PC-9 (cell line): ENCODE measurements at regions of chr3 and their contacts with region 1.

Region 1: GRCh38 chr3:130539005-130539404 is 22.0 kb downstream of the COL6A6 start:
- DNase-seq: peak in 1 of 2 experiments; percentile 43
- H3K4me3 ChIP-seq: no peak overlapping the region
- H3K27ac ChIP-seq: no peak overlapping the region
- H3K4me1 ChIP-seq: no peaks in the 10 kb centered on the region
- H3K27me3 ChIP-seq: peaks cover 2% of the 10 kb centered on the region; the same call in 1 of the 2 replicates
- CTCF ChIP-seq: peak; percentile 81

Region 2: DNA sequence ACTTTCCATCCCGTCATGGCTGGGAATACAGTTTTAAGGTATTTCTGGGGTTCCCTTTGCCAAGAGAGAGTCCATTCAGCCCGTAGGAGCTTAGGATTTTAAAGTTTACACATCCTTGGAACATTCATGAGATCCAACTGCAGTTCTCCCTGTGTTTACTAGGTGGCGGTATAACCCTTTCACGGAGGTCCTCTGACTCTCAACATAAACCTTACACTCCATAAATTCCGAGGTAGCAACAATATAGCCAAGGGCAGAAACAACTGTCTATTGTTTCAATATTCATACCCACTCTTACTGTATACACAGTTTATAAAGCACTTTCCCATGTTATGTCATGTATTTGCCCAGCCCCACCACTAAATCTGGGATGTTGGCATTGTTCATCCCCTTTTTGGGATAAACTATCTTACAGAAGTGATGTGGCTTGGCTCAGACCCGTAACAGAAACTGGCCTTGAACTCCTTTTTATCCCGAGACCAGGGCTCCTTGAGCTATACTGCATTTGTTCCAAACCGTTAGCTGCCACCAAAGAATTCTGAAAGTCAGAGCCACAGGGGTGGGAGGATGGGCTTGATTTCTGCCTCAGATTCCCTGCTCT is 262.7 kb before region 1 on chr3:
- CTCF ChIA-PET with region 1: interaction called, 4 read pairs
- POLR2A ChIA-PET with region 1: no interaction called
- intact Hi-C with region 1: loop called (anchors 1 kb)
- DNase-seq: peak; percentile 11 to 51
- H3K4me3 ChIP-seq: no peak overlapping the region
- H3K27ac ChIP-seq: no peak overlapping the region
- H3K4me1 ChIP-seq: no peaks in the 10 kb centered on the region
- H3K27me3 ChIP-seq: peaks cover 31% of the 10 kb centered on the region
- CTCF ChIP-seq: peak; percentile 91

Region 3: GRCh38 chr3:130582457-130583153 is 43.6 kb after region 1 on chr3:
- CTCF ChIA-PET with region 1: no interaction called
- POLR2A ChIA-PET with region 1: no interaction called
- intact Hi-C with region 1: no loop called
- DNase-seq: no peak
- H3K4me3 ChIP-seq: no peak overlapping the region
- H3K27ac ChIP-seq: no peak overlapping the region
- H3K4me1 ChIP-seq: no peaks in the 10 kb centered on the region
- H3K27me3 ChIP-seq: peaks cover 40% of the 10 kb centered on the region
- CTCF ChIP-seq: no peak

Region 4: DNA sequence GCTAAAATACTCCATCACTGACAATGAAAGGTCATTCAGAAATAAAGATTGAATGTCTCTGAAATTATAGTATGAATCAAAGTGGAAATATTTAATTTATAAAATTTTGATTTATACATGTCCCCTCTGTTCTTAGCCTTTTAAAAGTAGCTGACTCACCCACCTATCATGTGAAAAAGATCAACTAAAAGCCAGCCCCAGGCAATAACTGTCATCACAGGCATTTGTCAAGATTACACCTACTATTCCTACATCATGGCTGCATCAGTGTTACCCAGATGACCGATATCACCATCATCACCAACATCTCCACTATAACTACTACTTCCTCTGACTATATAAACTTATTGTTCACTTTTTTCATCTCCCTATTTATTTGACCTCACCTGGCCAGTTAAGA is 221.9 kb after region 1 on chr3:
- CTCF ChIA-PET with region 1: no interaction called
- POLR2A ChIA-PET with region 1: no interaction called
- intact Hi-C with region 1: no loop called
- DNase-seq: peak in 1 of 2 experiments; percentile 69
- H3K4me3 ChIP-seq: no peak overlapping the region
- H3K27ac ChIP-seq: no peak overlapping the region
- H3K4me1 ChIP-seq: peaks cover 21% of the 10 kb centered on the region
- H3K27me3 ChIP-seq: no peaks in the 10 kb centered on the region
- CTCF ChIP-seq: no peak